ENCODE measurements at regions of chr11 and their contacts with region 1.

Region 1: GRCh38 chr11:10405855-10406592 is 49.0 kb upstream of the AMPD3 start:
- DNase-seq: peak; percentile 87
- ATAC-seq: peak; percentile 41
- H3K4me3 ChIP-seq: no peak overlapping the region
- H3K27ac ChIP-seq: no peak overlapping the region
- H3K4me1 ChIP-seq: peaks cover 21% of the 10 kb centered on the region
- H3K27me3 ChIP-seq: no peaks in the 10 kb centered on the region
- CTCF ChIP-seq: peak; percentile 70

Region 2: GRCh38 chr11:10329935-10330334 is 76.1 kb before region 1 on chr11:
- CTCF ChIA-PET with region 1: interaction called, 3 read pairs
- POLR2A ChIA-PET with region 1: no interaction called
- intact Hi-C with region 1: loop called (anchors 2 kb)
- DNase-seq: peak; percentile 91
- ATAC-seq: peak; percentile 55
- H3K4me3 ChIP-seq: no peak overlapping the region
- H3K27ac ChIP-seq: peak overlapping the region; percentile 84
- H3K4me1 ChIP-seq: peaks cover 49% of the 10 kb centered on the region
- H3K27me3 ChIP-seq: no peaks in the 10 kb centered on the region
- CTCF ChIP-seq: no peak

Region 3: GRCh38 chr11:10375280-10375971 is 30.6 kb before region 1 on chr11:
- CTCF ChIA-PET with region 1: no interaction called
- POLR2A ChIA-PET with region 1: no interaction called
- intact Hi-C with region 1: loop called (anchors 2 kb)
- DNase-seq: peak; percentile 93
- ATAC-seq: peak; percentile 90
- H3K4me3 ChIP-seq: no peak overlapping the region
- H3K27ac ChIP-seq: peak overlapping the region; percentile 91
- H3K4me1 ChIP-seq: peaks cover 54% of the 10 kb centered on the region
- H3K27me3 ChIP-seq: no peaks in the 10 kb centered on the region
- CTCF ChIP-seq: no peak

Measured in PC-3 (cell line).